ENCODE measurements at regions of chr7 and their contacts with region 1.

Region 1: DNA sequence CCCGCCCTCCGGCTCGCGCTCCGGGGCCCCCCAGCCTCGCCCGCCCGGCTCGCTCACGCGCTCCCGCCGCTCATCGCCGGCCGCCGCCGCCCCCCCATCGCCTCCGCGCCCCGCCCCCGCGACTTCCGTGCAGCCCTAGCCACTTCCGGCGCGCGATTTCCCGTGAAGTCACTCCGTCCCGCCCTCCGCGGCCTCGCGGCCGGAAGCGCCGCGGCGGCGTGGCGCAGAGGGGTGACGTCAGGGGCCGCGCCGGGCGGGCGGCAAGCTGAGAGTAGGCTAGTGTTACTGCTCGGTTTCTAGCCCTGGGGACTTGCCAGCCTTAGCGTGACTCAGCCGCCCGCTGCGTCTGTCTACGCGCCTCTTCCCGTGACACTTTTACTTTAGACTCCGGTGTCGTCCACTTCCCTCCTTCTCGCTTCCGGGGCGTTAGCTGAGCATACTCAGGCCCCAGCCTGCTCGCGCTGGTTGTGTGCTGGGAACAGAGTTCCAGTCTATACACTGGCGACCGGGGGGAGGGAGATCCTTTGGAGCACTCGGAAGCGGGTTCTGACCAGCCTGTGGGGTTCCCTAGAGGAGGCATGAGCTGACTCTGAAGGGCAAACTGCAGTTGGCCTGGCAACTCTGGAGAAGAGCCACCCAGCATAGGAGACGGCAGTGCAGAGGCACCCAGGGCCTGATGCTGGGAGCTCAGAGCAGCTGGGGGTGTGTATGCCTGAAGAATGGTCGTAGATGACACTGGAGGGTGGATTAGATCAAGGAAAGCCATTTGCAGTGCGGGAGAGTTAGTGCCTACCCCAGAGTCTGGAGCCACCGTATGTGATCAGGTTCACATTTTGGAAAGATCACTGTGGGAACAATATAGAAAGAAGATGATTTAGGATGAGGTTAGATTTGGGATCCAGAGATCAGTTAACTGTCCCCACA is at the start of gene PURB:
- DNase-seq: peak; percentile 93 to 98 (median 96)
- ATAC-seq: peak; percentile 88 to 89
- H3K4me3 Mint-ChIP-seq: peak within 1 kb of the TSS; percentile 89 to 98 (median 96)
- H3K27ac Mint-ChIP-seq: peak within 1 kb of the TSS; percentile 98 to 100 (median 100)
- H3K4me1 Mint-ChIP-seq: peaks cover 5 to 61% (median 30%) of the 10 kb centered on the region in 4 donors
- H3K27me3 Mint-ChIP-seq: no peaks in the 10 kb centered on the region
- polyA plus RNA-seq, gene PURB: 2.0 to 3.2 (median 2.6) TPM

Region 2: GRCh38 chr7:44581879-44582603 is 303.6 kb before region 1 on chr7 and contains the start of gene TMED4:
- POLR2A ChIA-PET with region 1: interaction called, 15 read pairs
- DNase-seq: peak; percentile 99 to 100 (median 100)
- ATAC-seq: peak; percentile 84 to 85
- H3K4me3 Mint-ChIP-seq: peak within 1 kb of the TSS; percentile 87 to 93 (median 91)
- H3K27ac Mint-ChIP-seq: peak within 1 kb of the TSS; percentile 91 to 99 (median 98)
- H3K4me1 Mint-ChIP-seq: peaks cover 14 to 37% (median 35%) of the 10 kb centered on the region in 4 donors
- H3K27me3 Mint-ChIP-seq: peaks cover 0 to 3% (median 0%) of the 10 kb centered on the region in 5 donors
- polyA plus RNA-seq, gene TMED4: 61.4 to 80.4 (median 71.8) TPM

Region 3: GRCh38 chr7:44797329-44798251 is 88.1 kb before region 1 on chr7:
- POLR2A ChIA-PET with region 1: interaction called, 13 read pairs
- DNase-seq: peak; percentile 70 to 92 (median 80)
- ATAC-seq: peak; percentile 48 to 59
- H3K4me3 Mint-ChIP-seq: peak overlapping the region; percentile 87 to 100 (median 95)
- H3K27ac Mint-ChIP-seq: peak overlapping the region; percentile 90 to 99 (median 98)
- H3K4me1 Mint-ChIP-seq: peaks cover 15 to 47% (median 45%) of the 10 kb centered on the region in 4 donors
- H3K27me3 Mint-ChIP-seq: no peaks in the 10 kb centered on the region

Region 4: GRCh38 chr7:44858161-44858560 is 27.5 kb before region 1 on chr7:
- POLR2A ChIA-PET with region 1: interaction called, 15 read pairs
- DNase-seq: no peak
- ATAC-seq: no peak
- H3K4me3 Mint-ChIP-seq: no peak overlapping the region
- H3K27ac Mint-ChIP-seq: peak overlapping the region in 1 of 10 donors; percentile 56
- H3K4me1 Mint-ChIP-seq: peaks cover 0 to 5% (median 2%) of the 10 kb centered on the region in 4 donors
- H3K27me3 Mint-ChIP-seq: peaks cover 0 to 5% (median 2%) of the 10 kb centered on the region in 5 donors

Region 5: GRCh38 chr7:44920119-44920518 is 34.5 kb after region 1 on chr7:
- POLR2A ChIA-PET with region 1: interaction called, 14 read pairs
- DNase-seq: no peak
- ATAC-seq: no peak
- H3K4me3 Mint-ChIP-seq: no peak overlapping the region
- H3K27ac Mint-ChIP-seq: peak overlapping the region in 4 of 10 donors; percentile 16 to 83 (median 58)
- H3K4me1 Mint-ChIP-seq: peaks cover 0 to 6% (median 4%) of the 10 kb centered on the region in 4 donors
- H3K27me3 Mint-ChIP-seq: peaks cover 0 to 1% (median 0%) of the 10 kb centered on the region in 5 donors

Region 6: GRCh38 chr7:44999245-45000095 is 113.8 kb after region 1 on chr7:
- POLR2A ChIA-PET with region 1: interaction called, 10 read pairs
- DNase-seq: peak; percentile 96 to 100 (median 98)
- ATAC-seq: peak; percentile 82 to 83
- H3K4me3 Mint-ChIP-seq: peak overlapping the region; percentile 84 to 98 (median 97)
- H3K27ac Mint-ChIP-seq: peak overlapping the region; percentile 91 to 99 (median 97)
- H3K4me1 Mint-ChIP-seq: peaks cover 21 to 66% (median 50%) of the 10 kb centered on the region in 4 donors
- H3K27me3 Mint-ChIP-seq: no peaks in the 10 kb centered on the region

Measured in naive thymus-derived CD8-positive, alpha-beta T cell (primary cell).